Activated CD4-positive, alpha-beta memory T cell treated with anti-CD3 and anti-CD28 coated beads, Interleukin-2, amount 10 ng/mL, durations not matched to agents 7 days and 5 days (primary cell): ENCODE measurements at regions of chr10 and their contacts with region 1.

Region 1: DNA sequence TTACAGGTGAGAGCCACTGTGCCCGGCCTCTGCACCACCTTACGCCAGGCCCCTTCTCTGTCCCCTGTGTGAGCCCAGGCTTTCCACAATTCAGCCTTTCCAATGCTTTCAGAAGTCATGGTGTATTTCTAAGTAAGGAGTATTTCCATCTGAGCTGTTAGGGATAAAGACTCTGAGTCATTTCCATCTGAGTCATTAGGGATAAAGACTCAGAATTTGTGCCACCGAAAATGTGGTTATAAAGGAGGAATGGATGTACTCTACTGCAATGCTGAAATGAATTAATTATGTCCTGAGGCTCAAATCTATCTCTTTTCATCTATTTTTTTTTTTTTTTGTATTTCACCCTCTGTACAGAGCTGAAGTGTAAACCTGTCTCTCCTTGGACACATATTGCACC is 84.0 kb downstream of the GATA3 start:
- DNase-seq: no peak
- H3K4me3 Mint-ChIP-seq: peak overlapping the region; percentile 82
- H3K27ac Mint-ChIP-seq: peak overlapping the region; percentile 97
- H3K4me1 Mint-ChIP-seq: peaks cover 56% of the 10 kb centered on the region
- H3K27me3 Mint-ChIP-seq: no peaks in the 10 kb centered on the region

Region 2: DNA sequence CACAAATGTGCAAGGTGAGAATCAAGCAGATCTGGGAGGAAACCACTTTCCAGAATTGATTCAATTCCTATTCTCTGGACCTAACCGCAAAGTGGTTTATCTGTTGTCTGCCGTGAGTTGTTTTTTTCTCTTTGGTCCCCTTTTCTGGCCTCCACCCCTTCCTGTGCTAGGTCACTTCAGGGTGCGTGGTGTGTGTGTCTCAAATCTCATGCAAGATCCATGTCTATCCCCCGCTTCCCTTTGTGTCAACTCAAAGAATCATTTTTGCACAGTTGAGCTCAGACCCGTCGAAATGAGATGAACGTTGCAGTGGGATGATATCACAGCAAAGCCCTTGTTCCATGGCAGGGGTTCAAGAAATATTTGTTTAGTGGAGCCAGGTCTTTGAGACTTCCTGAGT is 100.5 kb after region 1 on chr10:
- CTCF ChIA-PET with region 1: no interaction called
- POLR2A ChIA-PET with region 1: interaction called, 13 read pairs
- DNase-seq: peak; percentile 63
- H3K4me3 Mint-ChIP-seq: peak overlapping the region; percentile 6
- H3K27ac Mint-ChIP-seq: peak overlapping the region; percentile 77
- H3K4me1 Mint-ChIP-seq: peaks cover 68% of the 10 kb centered on the region
- H3K27me3 Mint-ChIP-seq: no peaks in the 10 kb centered on the region

Region 3: DNA sequence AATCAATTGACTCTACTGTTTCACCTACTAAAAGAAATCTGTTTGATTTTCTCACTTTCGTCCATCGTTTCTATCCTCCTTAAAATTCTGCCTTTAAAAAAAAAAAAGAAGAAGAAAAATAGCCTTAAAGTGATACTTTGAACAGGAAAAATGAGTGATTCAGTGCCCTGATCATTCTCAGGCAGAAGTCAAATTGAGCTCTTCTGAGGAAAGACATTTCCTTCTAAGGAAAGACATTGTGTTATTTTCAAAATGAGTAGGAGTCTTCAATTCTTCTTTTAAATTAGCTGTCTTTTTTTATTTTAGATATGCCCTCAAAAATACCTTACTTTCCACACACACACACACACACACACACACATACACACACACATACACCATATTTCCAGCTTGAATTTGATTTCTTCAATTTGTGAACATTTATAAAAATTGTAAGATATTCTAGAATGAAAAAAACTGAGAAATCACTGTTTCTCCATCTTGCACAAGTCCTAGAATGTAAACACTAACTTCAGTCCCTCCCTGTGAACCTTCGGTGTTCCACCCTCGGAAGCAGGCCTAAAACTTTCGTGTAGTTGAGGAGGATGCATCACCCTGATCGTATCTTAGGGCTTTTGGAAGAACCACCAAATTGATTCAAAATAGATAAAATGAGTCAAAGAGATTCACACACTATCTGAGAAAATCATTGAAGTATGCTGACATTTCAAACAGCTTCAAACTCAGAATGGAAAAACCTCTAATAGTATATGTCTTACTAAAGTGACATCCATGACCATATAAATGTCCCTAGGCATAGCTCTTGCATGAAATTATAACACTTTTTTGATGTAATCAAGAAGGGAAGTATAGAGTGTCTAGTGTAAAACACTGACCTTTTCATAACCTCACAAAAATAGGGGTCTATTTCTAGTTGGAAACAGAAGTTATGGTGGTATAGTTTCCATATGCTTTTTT is 186.8 kb after region 1 on chr10:
- CTCF ChIA-PET with region 1: no interaction called
- POLR2A ChIA-PET with region 1: interaction called, 20 read pairs
- DNase-seq: peak; percentile 35
- H3K4me3 Mint-ChIP-seq: peak overlapping the region; percentile 10
- H3K27ac Mint-ChIP-seq: peak overlapping the region; percentile 82
- H3K4me1 Mint-ChIP-seq: peaks cover 70% of the 10 kb centered on the region
- H3K27me3 Mint-ChIP-seq: no peaks in the 10 kb centered on the region

Region 4: GRCh38 chr10:8360365-8360764 is 221.9 kb after region 1 on chr10:
- CTCF ChIA-PET with region 1: no interaction called
- POLR2A ChIA-PET with region 1: interaction called, 14 read pairs
- DNase-seq: no peak
- H3K4me3 Mint-ChIP-seq: peak overlapping the region; percentile 28
- H3K27ac Mint-ChIP-seq: peak overlapping the region; percentile 88
- H3K4me1 Mint-ChIP-seq: peaks cover 72% of the 10 kb centered on the region
- H3K27me3 Mint-ChIP-seq: peaks cover 2% of the 10 kb centered on the region